ENCODE measurements at regions of chr12 and their contacts with region 1.

Region 1: DNA sequence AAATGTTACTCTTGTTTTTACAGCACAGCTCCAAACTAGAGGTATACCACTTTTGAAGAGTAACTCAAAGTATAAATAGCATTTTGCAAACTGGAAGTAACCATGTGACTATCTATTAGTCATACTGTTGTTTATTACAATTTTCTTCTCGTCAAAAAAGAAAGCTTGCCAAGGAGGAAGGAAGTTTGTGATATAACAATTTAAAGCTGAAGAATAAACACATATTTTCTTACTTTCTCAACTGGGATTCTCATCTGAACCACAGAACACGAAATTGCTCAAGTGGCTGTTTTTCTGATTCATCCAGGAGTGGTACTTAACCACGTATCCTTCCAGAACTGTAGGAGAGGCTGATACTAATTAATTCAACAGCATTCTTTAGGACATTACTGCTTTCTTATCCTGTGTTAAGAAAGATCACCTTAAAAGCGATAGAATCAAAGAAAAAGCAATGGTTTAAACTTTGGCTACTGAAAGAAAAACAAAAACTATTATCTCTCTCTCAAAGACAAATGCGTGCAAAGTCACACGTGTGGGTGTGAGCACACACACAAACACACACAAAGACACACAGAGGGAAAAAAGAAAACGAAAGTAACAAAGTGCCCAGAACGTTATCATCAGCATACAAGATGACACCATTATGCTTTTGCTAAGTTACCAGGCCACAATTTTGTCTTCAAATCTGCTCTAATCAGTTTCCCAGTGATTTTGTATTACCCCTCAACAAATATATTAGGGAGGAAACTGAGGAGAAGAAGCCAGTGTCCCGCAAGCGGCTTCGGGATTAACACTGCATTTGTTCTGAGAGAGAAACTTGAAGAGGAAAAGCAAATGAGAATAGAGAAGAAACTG is at the start of gene CLEC2B:
- DNase-seq: peak in 7 of 9 donors; percentile 54 to 71 (median 58)
- ATAC-seq: peak; percentile 83
- H3K4me3 ChIP-seq: peak within 1 kb of the TSS; percentile 68
- H3K4me3 Mint-ChIP-seq: peak within 1 kb of the TSS; percentile 87 to 99 (median 93)
- H3K27ac ChIP-seq: peak within 1 kb of the TSS; percentile 94
- H3K27ac Mint-ChIP-seq: peak within 1 kb of the TSS; percentile 97 to 100 (median 99)
- H3K4me1 ChIP-seq: peaks cover 7 to 14% of the 10 kb centered on the region in 2 donors
- H3K4me1 Mint-ChIP-seq: peaks cover 7 to 44% (median 29%) of the 10 kb centered on the region in 7 donors
- H3K27me3 ChIP-seq: no peaks in the 10 kb centered on the region
- H3K27me3 Mint-ChIP-seq: no peaks in the 10 kb centered on the region
- total RNA-seq, gene CLEC2B: 50.1 to 86.8 (median 73.8) TPM

Region 2: DNA sequence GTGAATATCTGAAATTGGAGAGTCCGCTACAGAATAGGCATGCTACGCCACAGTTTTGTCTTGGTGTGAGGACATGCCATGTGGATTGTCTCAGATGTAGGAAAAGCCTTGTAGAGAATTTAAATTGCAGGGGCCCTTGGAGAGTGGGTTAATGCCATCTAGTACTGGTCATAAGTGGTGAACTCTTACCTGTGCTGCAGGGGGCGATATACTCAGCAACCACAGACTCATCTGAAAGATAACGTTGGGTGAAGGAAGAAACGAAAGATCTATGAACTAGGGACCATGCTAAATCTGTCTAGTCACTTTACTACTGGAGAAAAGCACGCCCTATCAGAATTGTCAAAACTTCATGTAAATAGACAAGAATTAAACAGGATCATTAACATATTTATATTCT is 720.2 kb before region 1 on chr12:
- CTCF ChIA-PET with region 1: no interaction called
- POLR2A ChIA-PET with region 1: no interaction called
- intact Hi-C with region 1: no loop called
- DNase-seq: no peak
- ATAC-seq: no peak
- H3K4me3 ChIP-seq: no peak overlapping the region
- H3K4me3 Mint-ChIP-seq: no peak overlapping the region
- H3K27ac ChIP-seq: no peak overlapping the region
- H3K27ac Mint-ChIP-seq: no peak overlapping the region
- H3K4me1 ChIP-seq: no peaks in the 10 kb centered on the region
- H3K4me1 Mint-ChIP-seq: peaks cover 0 to 7% (median 0%) of the 10 kb centered on the region in 7 donors
- H3K27me3 ChIP-seq: no peaks in the 10 kb centered on the region
- H3K27me3 Mint-ChIP-seq: no peaks in the 10 kb centered on the region

Region 3: GRCh38 chr12:9276990-9277389 is 592.5 kb before region 1 on chr12:
- CTCF ChIA-PET with region 1: no interaction called
- POLR2A ChIA-PET with region 1: no interaction called
- intact Hi-C with region 1: loop called in 1 of 2 experiments (anchors 5 kb)
- DNase-seq: no peak
- ATAC-seq: no peak
- H3K4me3 ChIP-seq: no peak overlapping the region
- H3K4me3 Mint-ChIP-seq: no peak overlapping the region
- H3K27ac ChIP-seq: no peak overlapping the region
- H3K27ac Mint-ChIP-seq: no peak overlapping the region
- H3K4me1 ChIP-seq: no peaks in the 10 kb centered on the region
- H3K4me1 Mint-ChIP-seq: no peaks in the 10 kb centered on the region
- H3K27me3 ChIP-seq: no peaks in the 10 kb centered on the region
- H3K27me3 Mint-ChIP-seq: peaks cover 0 to 31% (median 17%) of the 10 kb centered on the region in 5 donors

Region 4: DNA sequence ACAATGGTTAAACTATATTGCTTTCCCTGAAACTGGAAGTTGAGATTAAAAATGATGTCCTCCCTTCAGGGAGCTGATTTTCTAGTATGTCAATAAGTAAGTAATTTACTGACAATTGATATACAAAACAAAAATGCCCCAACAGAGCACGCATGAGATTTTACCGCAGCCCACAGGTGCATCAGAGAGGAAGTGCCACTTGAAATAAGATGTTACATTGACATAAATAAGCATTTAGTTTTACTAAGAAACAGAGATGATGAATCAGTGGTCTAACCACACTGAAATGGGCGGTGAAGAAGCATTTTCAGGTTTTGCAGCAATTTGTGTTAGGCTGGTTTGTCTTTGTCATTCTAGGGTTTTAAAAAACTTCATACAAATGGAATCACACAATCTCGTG is 127.8 kb before region 1 on chr12:
- CTCF ChIA-PET with region 1: interaction called, 5 read pairs
- POLR2A ChIA-PET with region 1: interaction called, 12 read pairs
- intact Hi-C with region 1: loop called in 1 of 2 experiments (anchors 2 kb)
- DNase-seq: peak in 8 of 9 donors; percentile 63 to 95 (median 90)
- ATAC-seq: peak; percentile 84
- H3K4me3 ChIP-seq: peak overlapping the region; percentile 15
- H3K4me3 Mint-ChIP-seq: peak overlapping the region; percentile 22 to 95 (median 83)
- H3K27ac ChIP-seq: peak overlapping the region; percentile 76
- H3K27ac Mint-ChIP-seq: peak overlapping the region; percentile 89 to 100 (median 98)
- H3K4me1 ChIP-seq: peaks cover 55 to 59% of the 10 kb centered on the region in 2 donors
- H3K4me1 Mint-ChIP-seq: peaks cover 51 to 81% (median 71%) of the 10 kb centered on the region in 7 donors
- H3K27me3 ChIP-seq: no peaks in the 10 kb centered on the region
- H3K27me3 Mint-ChIP-seq: peaks cover 0 to 6% (median 0%) of the 10 kb centered on the region in 5 donors

Region 5: DNA sequence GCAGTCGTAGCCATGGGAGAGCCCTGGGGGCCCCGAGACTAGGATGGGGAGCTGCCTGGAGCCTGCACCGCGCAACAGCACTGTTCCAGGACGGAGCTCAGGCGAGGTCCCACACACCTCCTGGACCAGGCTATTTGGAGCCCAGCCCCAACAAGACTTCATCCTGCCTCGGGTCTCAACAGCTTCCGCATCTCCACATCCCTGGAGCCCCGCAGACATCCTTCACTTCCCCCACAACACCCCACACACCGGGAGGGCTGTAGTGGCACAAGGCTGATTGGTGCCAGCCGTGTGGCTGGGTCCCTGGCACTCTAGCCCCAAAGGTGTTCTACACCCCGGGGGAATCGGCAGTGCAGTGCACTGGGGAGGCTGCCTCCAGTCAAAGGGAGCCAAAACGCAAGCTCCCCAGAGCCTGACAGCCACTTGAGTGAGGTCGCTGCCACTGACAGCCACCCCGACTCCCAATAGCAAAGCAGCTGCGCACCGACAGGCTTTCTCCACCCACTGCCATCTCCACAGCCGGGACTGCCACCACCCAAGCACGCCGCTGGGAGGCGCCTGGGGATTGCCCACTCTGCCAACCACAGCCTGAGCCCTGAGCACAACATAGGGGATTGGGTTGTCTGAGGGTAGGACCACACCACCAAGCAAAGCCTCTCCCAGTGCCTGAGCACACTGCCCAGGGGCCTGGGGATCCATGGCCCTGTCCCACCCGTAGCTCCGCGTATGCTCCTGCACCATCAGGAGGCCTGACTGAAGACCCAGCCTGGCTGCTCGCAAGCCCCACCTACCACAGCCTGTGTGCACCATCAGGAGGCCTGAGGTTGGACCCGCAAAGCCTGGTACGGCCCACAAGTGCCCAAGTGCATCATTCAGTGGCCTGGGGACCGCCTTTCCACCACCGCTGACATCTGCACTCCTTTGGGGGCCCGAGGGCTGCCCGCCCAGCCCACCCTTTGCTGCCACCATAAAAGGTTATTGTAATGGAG is 55.4 kb before region 1 on chr12:
- CTCF ChIA-PET with region 1: interaction called, 4 read pairs
- POLR2A ChIA-PET with region 1: interaction called, 25 read pairs
- intact Hi-C with region 1: loop called (anchors 1 kb)
- DNase-seq: peak; percentile 85 to 98 (median 94)
- ATAC-seq: peak; percentile 99
- H3K4me3 ChIP-seq: peak overlapping the region; percentile 70
- H3K4me3 Mint-ChIP-seq: peak overlapping the region; percentile 85 to 97 (median 92)
- H3K27ac ChIP-seq: peak overlapping the region; percentile 71
- H3K27ac Mint-ChIP-seq: peak overlapping the region; percentile 75 to 97 (median 90)
- H3K4me1 ChIP-seq: no peaks in the 10 kb centered on the region
- H3K4me1 Mint-ChIP-seq: peaks cover 9 to 30% (median 14%) of the 10 kb centered on the region in 7 donors
- H3K27me3 ChIP-seq: no peaks in the 10 kb centered on the region
- H3K27me3 Mint-ChIP-seq: peaks cover 0 to 35% (median 5%) of the 10 kb centered on the region in 5 donors

Region 6: GRCh38 chr12:9883175-9883574 is 13.6 kb after region 1 on chr12:
- CTCF ChIA-PET with region 1: no interaction called
- POLR2A ChIA-PET with region 1: interaction called, 9 read pairs
- intact Hi-C with region 1: loop called in 1 of 2 experiments (anchors 2 kb)
- DNase-seq: no peak
- ATAC-seq: no peak
- H3K4me3 ChIP-seq: no peak overlapping the region
- H3K4me3 Mint-ChIP-seq: no peak overlapping the region
- H3K27ac ChIP-seq: no peak overlapping the region
- H3K27ac Mint-ChIP-seq: no peak overlapping the region
- H3K4me1 ChIP-seq: no peaks in the 10 kb centered on the region
- H3K4me1 Mint-ChIP-seq: peaks cover 4 to 18% (median 5%) of the 10 kb centered on the region in 7 donors
- H3K27me3 ChIP-seq: no peaks in the 10 kb centered on the region
- H3K27me3 Mint-ChIP-seq: peaks cover 0 to 6% (median 0%) of the 10 kb centered on the region in 5 donors

Region 7: DNA sequence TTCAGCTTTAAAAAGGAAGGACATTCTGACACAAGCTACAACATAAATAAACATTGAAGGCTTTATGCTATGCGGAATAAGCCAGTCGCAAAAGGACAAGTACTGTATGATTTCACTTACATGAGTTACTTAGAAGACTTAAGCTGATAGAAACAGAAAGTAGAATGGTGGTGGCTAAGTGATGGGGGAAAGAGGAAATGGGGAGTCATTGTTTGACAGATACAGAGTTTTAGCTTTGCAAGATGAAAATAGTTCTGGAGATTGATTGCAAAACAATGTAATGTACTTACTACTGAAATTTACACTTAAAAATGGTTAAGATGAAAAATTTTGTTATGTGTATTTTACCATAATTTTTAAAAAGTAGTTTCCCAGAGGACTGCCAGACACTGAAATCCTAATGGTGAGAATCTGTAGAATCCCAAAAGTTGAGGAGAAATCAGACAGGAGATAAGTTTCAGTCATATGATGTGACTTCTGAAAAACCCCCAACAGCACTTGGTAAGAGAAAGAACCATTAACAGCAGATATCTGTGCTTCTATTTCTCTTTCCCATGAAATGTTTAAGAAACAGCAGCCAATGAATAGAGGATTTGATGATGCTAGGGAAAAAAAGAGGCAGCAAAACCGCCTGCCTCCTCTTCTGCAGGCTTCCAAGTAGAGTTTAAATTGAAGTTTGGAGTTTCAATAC is 79.2 kb after region 1 on chr12:
- CTCF ChIA-PET with region 1: interaction called, 3 read pairs
- POLR2A ChIA-PET with region 1: interaction called, 3 read pairs
- intact Hi-C with region 1: loop called in 1 of 2 experiments (anchors 2 kb)
- DNase-seq: peak in 5 of 9 donors; percentile 22 to 36 (median 26)
- ATAC-seq: peak; percentile 80
- H3K4me3 ChIP-seq: no peak overlapping the region
- H3K4me3 Mint-ChIP-seq: peak overlapping the region in 8 of 10 donors; percentile 0 to 53 (median 14)
- H3K27ac ChIP-seq: no peak overlapping the region
- H3K27ac Mint-ChIP-seq: peak overlapping the region; percentile 0 to 74 (median 2)
- H3K4me1 ChIP-seq: peaks cover 27 to 29% of the 10 kb centered on the region in 2 donors
- H3K4me1 Mint-ChIP-seq: peaks cover 40 to 61% (median 43%) of the 10 kb centered on the region in 7 donors
- H3K27me3 ChIP-seq: no peaks in the 10 kb centered on the region
- H3K27me3 Mint-ChIP-seq: no peaks in the 10 kb centered on the region

Region 8: GRCh38 chr12:10721651-10722501 is 852.3 kb after region 1 on chr12:
- CTCF ChIA-PET with region 1: no interaction called
- POLR2A ChIA-PET with region 1: no interaction called
- intact Hi-C with region 1: loop called in 1 of 2 experiments (anchors 2 kb)
- DNase-seq: peak; percentile 45 to 84 (median 74)
- ATAC-seq: peak; percentile 83
- H3K4me3 ChIP-seq: peak overlapping the region; percentile 83
- H3K4me3 Mint-ChIP-seq: peak overlapping the region; percentile 80 to 96 (median 93)
- H3K27ac ChIP-seq: peak overlapping the region; percentile 61
- H3K27ac Mint-ChIP-seq: peak overlapping the region; percentile 48 to 96 (median 87)
- H3K4me1 ChIP-seq: peaks cover 9 to 19% of the 10 kb centered on the region in 2 donors
- H3K4me1 Mint-ChIP-seq: peaks cover 14 to 43% (median 21%) of the 10 kb centered on the region in 7 donors
- H3K27me3 ChIP-seq: peaks cover 0 to 4% of the 10 kb centered on the region in 2 donors
- H3K27me3 Mint-ChIP-seq: peaks cover 20 to 60% (median 44%) of the 10 kb centered on the region in 5 donors